HepG2 (cell line): ENCODE measurements at regions of chr5 and their contacts with region 1.

Region 1: GRCh38 chr5:135466178-135467050 is 14.3 kb upstream of the TIFAB start:
- DNase-seq: peak; percentile 40
- ATAC-seq: peak; percentile 92
- H3K4me3 ChIP-seq: peak overlapping the region in 1 of 3 experiments; percentile 25; a peak in 1 of 6 replicates
- H3K27ac ChIP-seq: no peak overlapping the region
- H3K4me1 ChIP-seq: peaks cover 10% of the 10 kb centered on the region
- H3K27me3 ChIP-seq: peaks cover 0 to 11% of the 10 kb centered on the region in 2 experiments; a peak in 3 of 5 replicates
- CTCF ChIP-seq: peak; percentile 96
- EP300 ChIP-seq: no peak
- POLR2A ChIP-seq: no peak
- RAD21 ChIP-seq: peak; percentile 98

Region 2: DNA sequence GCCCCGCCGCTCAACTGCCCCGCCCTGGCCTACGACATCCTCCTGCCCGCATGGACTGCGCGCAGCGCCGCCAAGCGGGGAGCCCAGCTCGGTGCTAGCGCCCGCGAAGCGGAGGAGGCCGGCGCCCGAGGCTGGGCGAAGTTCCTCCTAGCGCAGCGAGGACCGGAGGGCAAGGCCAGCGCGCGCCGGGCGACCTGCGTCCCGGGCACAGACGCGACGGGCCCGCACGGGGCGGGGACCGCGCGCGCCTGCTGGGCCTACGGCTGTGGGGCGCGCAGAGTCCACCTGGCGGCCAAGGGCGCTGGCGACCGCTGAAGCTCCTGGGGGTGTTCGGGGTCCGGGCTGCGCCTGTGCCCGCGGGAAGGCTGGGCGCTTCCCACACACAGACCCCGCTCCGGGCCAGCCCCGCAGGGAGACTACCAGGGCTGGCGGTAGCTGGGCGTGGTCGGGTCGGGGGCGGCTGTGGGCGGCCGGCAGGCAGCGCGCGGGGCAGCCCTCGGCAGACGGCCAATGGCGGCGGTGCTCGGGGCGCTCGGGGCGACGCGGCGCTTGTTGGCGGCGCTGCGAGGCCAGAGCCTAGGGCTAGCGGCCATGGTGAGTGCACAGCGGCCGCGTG is 561.7 kb before region 1 on chr5 and contains the start of gene PCBD2:
- CTCF ChIA-PET with region 1: no interaction called
- POLR2A ChIA-PET with region 1: no interaction called
- in situ Hi-C with region 1: no loop called
- intact Hi-C with region 1: no loop called
- DNase-seq: peak; percentile 80
- ATAC-seq: peak; percentile 91
- H3K4me3 ChIP-seq: peak within 1 kb of the TSS; percentile 85 to 95 (median 87)
- H3K27ac ChIP-seq: peak within 1 kb of the TSS; percentile 99
- H3K4me1 ChIP-seq: peaks cover 13% of the 10 kb centered on the region; the same call in 1 of the 2 replicates
- H3K27me3 ChIP-seq: no peaks in the 10 kb centered on the region
- CTCF ChIP-seq: peak; percentile 94
- EP300 ChIP-seq: 0 out of 4 replicates have a peak, but pooled peaks of 1 of the 2 experiments have one; percentile 12
- POLR2A ChIP-seq: peak; percentile 74
- RAD21 ChIP-seq: peak; percentile 88
- total RNA-seq, gene PCBD2: 12.0 and 12.3 TPM in 2 replicates

Region 3: GRCh38 chr5:135482381-135482933 is 16.0 kb after region 1 on chr5:
- CTCF ChIA-PET with region 1: no interaction called
- POLR2A ChIA-PET with region 1: no interaction called
- in situ Hi-C with region 1: no loop called
- intact Hi-C with region 1: no loop called
- DNase-seq: peak; percentile 94
- ATAC-seq: peak; percentile 89
- H3K4me3 ChIP-seq: peak overlapping the region in 1 of 3 experiments; percentile 5; a peak in 1 of 6 replicates
- H3K27ac ChIP-seq: peak overlapping the region; percentile 81
- H3K4me1 ChIP-seq: peaks cover 56% of the 10 kb centered on the region
- H3K27me3 ChIP-seq: peaks cover 0 to 9% of the 10 kb centered on the region in 2 experiments; a peak in 2 of 5 replicates
- CTCF ChIP-seq: no peak
- EP300 ChIP-seq: peak in 1 of 2 experiments; percentile 92; a peak in 2 of 4 replicates
- POLR2A ChIP-seq: no peak
- RAD21 ChIP-seq: no peak

Region 4: DNA sequence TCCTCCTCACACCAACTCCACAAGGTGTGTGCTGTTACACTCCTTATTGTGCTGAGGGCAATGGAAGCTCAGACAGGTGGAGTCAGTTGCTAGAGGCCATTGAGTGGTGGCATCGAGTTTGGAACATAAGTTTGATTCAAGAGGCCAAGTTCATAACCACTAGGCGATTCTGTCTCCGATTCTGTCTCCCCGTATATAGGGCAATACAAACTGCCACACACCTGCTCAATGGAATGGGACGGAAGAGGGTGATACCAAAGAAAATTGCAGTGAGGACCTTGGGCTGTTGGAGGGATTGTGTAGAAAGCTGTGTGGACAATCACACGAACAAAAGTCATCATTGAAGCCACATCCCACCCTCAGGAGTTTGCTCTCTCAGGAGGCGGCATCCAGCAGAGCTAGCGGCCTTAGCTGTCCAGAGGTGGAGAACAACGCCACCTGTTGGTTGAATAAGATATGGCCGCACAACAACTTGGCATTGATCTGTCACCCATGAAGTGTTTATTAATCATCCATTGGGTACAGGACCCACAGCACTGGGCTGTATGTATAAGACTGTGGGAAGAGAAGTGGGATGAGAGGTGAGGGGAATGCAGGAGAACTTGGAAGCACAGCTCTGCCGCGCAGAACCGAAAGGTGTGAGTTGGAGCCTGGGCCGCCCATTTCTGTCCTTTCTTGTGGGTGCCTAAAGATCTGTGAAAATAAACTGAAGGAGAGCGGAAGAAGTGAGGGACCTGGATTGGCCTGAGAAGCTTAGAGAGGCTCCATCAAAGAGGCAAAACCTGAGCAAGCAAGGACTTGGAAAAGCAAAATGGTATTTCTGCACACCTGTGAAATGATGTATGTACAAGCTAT is 85.4 kb after region 1 on chr5:
- CTCF ChIA-PET with region 1: interaction called, 76 read pairs
- POLR2A ChIA-PET with region 1: interaction called, 3 read pairs
- in situ Hi-C with region 1: loop called (anchors 5 kb)
- intact Hi-C with region 1: loop called (anchors 1 kb)
- DNase-seq: peak; percentile 64
- ATAC-seq: peak; percentile 91
- H3K4me3 ChIP-seq: no peak overlapping the region
- H3K27ac ChIP-seq: no peak overlapping the region
- H3K4me1 ChIP-seq: no peaks in the 10 kb centered on the region
- H3K27me3 ChIP-seq: peaks cover 0 to 2% of the 10 kb centered on the region in 2 experiments; a peak in 1 of 5 replicates
- CTCF ChIP-seq: peak; percentile 92
- EP300 ChIP-seq: no peak
- POLR2A ChIP-seq: no peak
- RAD21 ChIP-seq: peak; percentile 84

Region 5: GRCh38 chr5:135565725-135566421 is 99.5 kb after region 1 on chr5:
- CTCF ChIA-PET with region 1: interaction called, 20 read pairs
- POLR2A ChIA-PET with region 1: no interaction called
- in situ Hi-C with region 1: no loop called
- intact Hi-C with region 1: loop called (anchors 2 kb)
- DNase-seq: peak; percentile 42
- ATAC-seq: peak; percentile 80
- H3K4me3 ChIP-seq: no peak overlapping the region
- H3K27ac ChIP-seq: no peak overlapping the region
- H3K4me1 ChIP-seq: no peaks in the 10 kb centered on the region
- H3K27me3 ChIP-seq: peaks cover 0 to 2% of the 10 kb centered on the region in 2 experiments; a peak in 3 of 5 replicates
- CTCF ChIP-seq: peak; percentile 80
- EP300 ChIP-seq: no peak
- POLR2A ChIP-seq: no peak
- RAD21 ChIP-seq: peak; percentile 40

Region 6: DNA sequence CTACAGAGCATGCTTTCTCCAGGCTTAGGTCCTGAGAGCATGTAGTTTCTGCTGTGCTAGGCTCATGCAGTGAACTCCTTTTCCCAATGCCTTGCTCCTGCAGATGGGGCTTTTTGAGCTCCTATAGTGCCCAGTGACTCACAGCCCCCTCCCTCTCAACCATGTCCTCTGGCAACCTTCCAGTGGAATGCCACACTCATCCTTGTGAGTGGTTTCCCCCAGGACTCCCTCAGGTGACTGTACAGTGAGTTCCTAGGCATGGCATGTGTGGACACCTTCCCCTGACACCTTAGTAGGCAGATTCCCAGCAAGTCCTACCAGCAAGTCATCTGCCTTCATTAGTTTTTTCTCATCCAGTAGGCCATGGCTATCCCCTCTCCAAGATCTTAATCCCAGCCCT is 184.7 kb after region 1 on chr5:
- CTCF ChIA-PET with region 1: no interaction called
- POLR2A ChIA-PET with region 1: no interaction called
- in situ Hi-C with region 1: no loop called
- intact Hi-C with region 1: no loop called
- DNase-seq: no peak
- ATAC-seq: no peak
- H3K4me3 ChIP-seq: no peak overlapping the region
- H3K27ac ChIP-seq: no peak overlapping the region
- H3K4me1 ChIP-seq: no peaks in the 10 kb centered on the region
- H3K27me3 ChIP-seq: 0 out of 5 replicates have a peak, but pooled peaks cover 0 to 1% of the 10 kb centered on the region in 2 experiments
- CTCF ChIP-seq: no peak
- EP300 ChIP-seq: no peak
- POLR2A ChIP-seq: no peak
- RAD21 ChIP-seq: no peak

Region 7: GRCh38 chr5:135729321-135729786 is 262.9 kb after region 1 on chr5:
- CTCF ChIA-PET with region 1: no interaction called
- POLR2A ChIA-PET with region 1: no interaction called
- in situ Hi-C with region 1: loop called (anchors 25 kb)
- intact Hi-C with region 1: no loop called
- DNase-seq: no peak
- ATAC-seq: no peak
- H3K4me3 ChIP-seq: no peak overlapping the region
- H3K27ac ChIP-seq: no peak overlapping the region
- H3K4me1 ChIP-seq: no peaks in the 10 kb centered on the region
- H3K27me3 ChIP-seq: no peaks in the 10 kb centered on the region
- CTCF ChIP-seq: no peak; the same call in 1 of the 2 replicates
- EP300 ChIP-seq: no peak
- POLR2A ChIP-seq: no peak
- RAD21 ChIP-seq: no peak